ENCODE measurements at regions of chr14 and their contacts with region 1.

Region 1: GRCh38 chr14:22900081-22900799 is 17.2 kb downstream of the REM2 start:
- DNase-seq: peak; percentile 44
- H3K4me3 Mint-ChIP-seq: no peak overlapping the region
- H3K27ac Mint-ChIP-seq: no peak overlapping the region
- H3K4me1 Mint-ChIP-seq: peaks cover 11% of the 10 kb centered on the region
- H3K27me3 Mint-ChIP-seq: no peaks in the 10 kb centered on the region

Region 2: GRCh38 chr14:22653012-22653621 is 247.1 kb before region 1 on chr14:
- CTCF ChIA-PET with region 1: no interaction called
- POLR2A ChIA-PET with region 1: no interaction called
- intact Hi-C with region 1: no loop called
- DNase-seq: peak; percentile 66
- H3K4me3 Mint-ChIP-seq: no peak overlapping the region
- H3K27ac Mint-ChIP-seq: no peak overlapping the region
- H3K4me1 Mint-ChIP-seq: no peaks in the 10 kb centered on the region
- H3K27me3 Mint-ChIP-seq: no peaks in the 10 kb centered on the region

Region 3: DNA sequence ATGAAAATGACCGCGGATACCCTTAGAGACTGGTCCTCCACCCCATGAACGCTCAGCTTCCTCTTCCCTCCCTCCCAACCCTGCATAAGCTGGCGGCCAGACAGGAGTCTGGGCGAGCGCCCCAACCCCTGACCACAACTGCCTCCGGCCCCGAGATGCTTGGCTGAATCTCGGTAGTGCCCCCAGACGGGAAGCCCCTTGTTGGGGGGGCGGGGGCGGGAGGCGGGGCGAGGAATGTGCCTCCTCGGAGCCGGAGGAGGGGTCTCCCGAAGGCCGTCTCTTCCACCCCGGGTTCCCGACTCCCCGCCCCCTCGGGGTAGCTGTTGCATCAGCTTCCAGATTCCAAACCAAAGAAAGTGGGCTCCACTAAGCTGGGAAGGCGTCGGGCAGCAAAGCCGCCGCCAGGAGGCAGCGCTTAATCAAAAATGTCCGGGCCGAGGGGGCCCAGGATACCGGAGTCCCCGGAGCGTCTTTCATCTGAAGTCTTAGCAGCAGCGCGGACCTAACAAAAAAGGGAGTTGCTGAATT is 77.6 kb before region 1 on chr14:
- CTCF ChIA-PET with region 1: interaction called, 25 read pairs
- POLR2A ChIA-PET with region 1: no interaction called
- intact Hi-C with region 1: loop called (anchors 2 kb)
- DNase-seq: peak; percentile 77
- H3K4me3 Mint-ChIP-seq: peak overlapping the region; percentile 63
- H3K27ac Mint-ChIP-seq: no peak overlapping the region
- H3K4me1 Mint-ChIP-seq: peaks cover 26% of the 10 kb centered on the region
- H3K27me3 Mint-ChIP-seq: peaks cover 12% of the 10 kb centered on the region

Region 4: DNA sequence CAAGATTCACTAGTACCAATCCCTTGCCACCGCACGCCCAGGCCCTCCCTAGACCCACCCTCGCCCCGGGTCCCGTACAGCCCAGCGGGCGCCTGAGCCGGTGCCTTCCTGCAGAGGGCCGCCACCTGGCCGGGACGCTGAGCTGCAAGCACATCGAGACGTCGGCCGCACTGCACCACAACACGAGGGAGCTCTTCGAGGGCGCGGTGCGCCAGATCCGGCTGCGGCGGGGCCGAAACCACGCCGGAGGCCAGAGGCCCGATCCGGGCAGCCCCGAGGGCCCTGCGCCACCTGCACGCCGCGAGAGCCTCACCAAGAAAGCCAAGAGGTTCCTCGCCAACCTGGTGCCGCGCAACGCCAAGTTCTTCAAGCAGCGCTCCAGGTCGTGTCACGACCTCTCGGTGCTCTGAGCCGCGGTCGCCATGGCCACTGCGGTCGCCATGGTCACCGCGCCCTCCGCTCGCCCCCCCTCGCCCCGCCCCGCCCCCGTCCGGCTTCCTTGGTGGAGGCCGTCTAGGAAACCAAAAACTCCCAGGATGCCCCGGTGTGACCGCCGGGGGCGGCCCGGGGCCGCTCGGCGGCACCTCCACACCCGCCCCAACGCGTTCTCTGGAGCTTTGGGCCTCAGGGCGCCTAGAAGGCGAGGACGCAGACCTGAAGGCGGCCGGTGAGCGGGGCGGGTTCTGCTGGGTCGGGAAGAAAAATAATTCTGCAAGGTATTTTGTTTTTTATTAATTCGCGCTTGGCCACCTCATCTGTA is 13.6 kb before region 1 on chr14:
- CTCF ChIA-PET with region 1: interaction called, 18 read pairs
- POLR2A ChIA-PET with region 1: interaction called, 6 read pairs
- intact Hi-C with region 1: loop called (anchors 1 kb)
- DNase-seq: peak; percentile 91
- H3K4me3 Mint-ChIP-seq: peak overlapping the region; percentile 92
- H3K27ac Mint-ChIP-seq: peak overlapping the region; percentile 88
- H3K4me1 Mint-ChIP-seq: peaks cover 57% of the 10 kb centered on the region
- H3K27me3 Mint-ChIP-seq: no peaks in the 10 kb centered on the region

Measured in activated CD4-positive, alpha-beta memory T cell treated with anti-CD3 and anti-CD28 coated beads for 36 hours (primary cell).